ENCODE measurements at regions of chr1 and their contacts with region 1.

Region 1: DNA sequence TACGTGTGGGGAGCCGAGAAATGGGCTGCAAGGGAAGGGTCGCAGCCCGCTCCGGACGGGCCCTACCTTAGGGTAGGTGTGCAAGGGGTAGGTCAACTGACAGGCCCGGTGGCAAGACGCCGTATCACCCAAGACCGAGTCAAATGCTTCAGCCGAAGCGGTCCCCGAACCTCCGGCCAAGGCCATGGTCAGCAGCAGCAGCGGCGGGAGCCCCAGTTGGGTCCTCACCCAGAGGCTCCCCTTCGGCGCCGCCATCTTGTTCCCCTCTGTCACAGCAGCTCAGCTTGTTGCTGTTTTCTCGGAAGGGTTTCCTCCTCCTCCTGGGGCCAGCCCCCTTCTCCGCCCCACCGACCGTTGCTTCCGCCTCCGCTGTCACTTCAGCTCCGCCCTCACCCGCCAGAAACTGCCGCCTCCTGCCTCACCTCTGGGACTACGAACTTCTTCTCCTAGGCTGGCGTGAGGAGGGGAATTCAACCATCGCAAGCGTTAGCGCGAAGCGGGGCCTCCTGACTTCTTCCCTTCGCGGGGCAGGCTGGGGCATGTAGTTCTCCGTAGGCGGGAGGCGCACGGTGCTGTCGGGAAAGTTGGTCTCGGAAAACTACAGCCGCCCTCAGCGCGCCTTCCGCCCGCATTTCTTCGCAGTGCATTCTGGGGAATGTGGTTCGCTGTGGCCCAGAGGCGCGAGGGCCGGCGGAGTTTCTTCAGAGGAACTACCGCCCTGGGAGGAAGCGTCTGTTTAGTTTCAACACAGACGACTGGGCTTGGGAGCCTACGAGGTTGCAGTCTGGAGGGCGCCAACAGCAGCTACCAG is at the starts of genes TCEANC2 and TMEM59:
- DNase-seq: peak; percentile 99
- H3K4me3 Mint-ChIP-seq: no peak within 1 kb of the TSS
- H3K27ac Mint-ChIP-seq: no peak within 1 kb of the TSS
- H3K4me1 Mint-ChIP-seq: peaks cover 13% of the 10 kb centered on the region
- H3K27me3 Mint-ChIP-seq: no peaks in the 10 kb centered on the region
- CTCF ChIP-seq: no peak
- total RNA-seq, gene TCEANC2: 3.6 and 6.0 TPM in 2 replicates
- total RNA-seq, gene TMEM59: 192 and 231 TPM in 2 replicates

Region 2: GRCh38 chr1:53837924-53838652 is 215.1 kb before region 1 on chr1 and contains the start of gene NDC1:
- CTCF ChIA-PET with region 1: no interaction called
- POLR2A ChIA-PET with region 1: interaction called, 13 read pairs
- intact Hi-C with region 1: no loop called
- DNase-seq: peak; percentile 98
- H3K4me3 Mint-ChIP-seq: peak within 1 kb of the TSS; percentile 100
- H3K27ac Mint-ChIP-seq: peak within 1 kb of the TSS; percentile 97
- H3K4me1 Mint-ChIP-seq: peaks cover 10% of the 10 kb centered on the region
- H3K27me3 Mint-ChIP-seq: no peaks in the 10 kb centered on the region
- CTCF ChIP-seq: no peak
- total RNA-seq, gene NDC1: 17.5 and 18.7 TPM in 2 replicates

Region 3: GRCh38 chr1:53878492-53879105 is 174.5 kb before region 1 on chr1:
- CTCF ChIA-PET with region 1: interaction called, 5 read pairs
- POLR2A ChIA-PET with region 1: interaction called, 5 read pairs
- intact Hi-C with region 1: loop called (anchors 5 kb)
- DNase-seq: peak; percentile 59
- H3K4me3 Mint-ChIP-seq: no peak overlapping the region
- H3K27ac Mint-ChIP-seq: no peak overlapping the region
- H3K4me1 Mint-ChIP-seq: no peaks in the 10 kb centered on the region
- H3K27me3 Mint-ChIP-seq: no peaks in the 10 kb centered on the region
- CTCF ChIP-seq: peak; percentile 63

Region 4: DNA sequence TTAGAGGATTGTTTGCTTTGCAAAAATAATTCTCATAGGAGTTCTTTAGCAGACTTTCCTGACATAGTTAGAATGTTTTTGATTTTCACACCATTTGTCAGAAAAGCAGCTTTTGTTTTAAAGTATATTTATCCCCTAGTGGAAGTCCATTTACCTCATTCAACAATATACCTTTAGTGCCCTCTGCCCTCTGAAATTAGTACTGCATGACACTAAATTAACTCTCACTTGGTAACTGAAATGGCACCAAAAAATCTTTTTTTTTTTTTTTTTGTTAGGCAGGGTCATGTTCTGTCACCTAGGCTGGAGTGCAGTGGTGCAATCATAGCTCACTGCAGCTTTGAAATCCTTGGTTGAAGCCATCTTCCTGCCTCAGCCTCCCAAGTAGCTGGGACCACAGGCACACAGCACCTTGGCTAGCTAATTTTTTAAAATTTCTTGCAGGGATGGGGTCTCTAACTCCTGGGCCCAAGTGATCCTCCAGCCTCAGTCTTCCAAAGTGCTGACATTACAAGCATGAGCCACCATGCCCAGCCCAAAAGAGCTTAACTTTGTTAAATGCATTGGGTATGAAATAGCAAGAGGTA is 93.4 kb before region 1 on chr1:
- CTCF ChIA-PET with region 1: interaction called, 6 read pairs
- POLR2A ChIA-PET with region 1: interaction called, 14 read pairs
- intact Hi-C with region 1: no loop called
- DNase-seq: peak; percentile 49
- H3K4me3 Mint-ChIP-seq: no peak overlapping the region
- H3K27ac Mint-ChIP-seq: no peak overlapping the region
- H3K4me1 Mint-ChIP-seq: peaks cover 20% of the 10 kb centered on the region
- H3K27me3 Mint-ChIP-seq: no peaks in the 10 kb centered on the region
- CTCF ChIP-seq: peak; percentile 46

Region 5: GRCh38 chr1:53971718-53972117 is 81.4 kb before region 1 on chr1:
- CTCF ChIA-PET with region 1: no interaction called
- POLR2A ChIA-PET with region 1: no interaction called
- intact Hi-C with region 1: no loop called
- DNase-seq: no peak
- H3K4me3 Mint-ChIP-seq: no peak overlapping the region
- H3K27ac Mint-ChIP-seq: no peak overlapping the region
- H3K4me1 Mint-ChIP-seq: no peaks in the 10 kb centered on the region
- H3K27me3 Mint-ChIP-seq: no peaks in the 10 kb centered on the region
- CTCF ChIP-seq: no peak

Region 6: DNA sequence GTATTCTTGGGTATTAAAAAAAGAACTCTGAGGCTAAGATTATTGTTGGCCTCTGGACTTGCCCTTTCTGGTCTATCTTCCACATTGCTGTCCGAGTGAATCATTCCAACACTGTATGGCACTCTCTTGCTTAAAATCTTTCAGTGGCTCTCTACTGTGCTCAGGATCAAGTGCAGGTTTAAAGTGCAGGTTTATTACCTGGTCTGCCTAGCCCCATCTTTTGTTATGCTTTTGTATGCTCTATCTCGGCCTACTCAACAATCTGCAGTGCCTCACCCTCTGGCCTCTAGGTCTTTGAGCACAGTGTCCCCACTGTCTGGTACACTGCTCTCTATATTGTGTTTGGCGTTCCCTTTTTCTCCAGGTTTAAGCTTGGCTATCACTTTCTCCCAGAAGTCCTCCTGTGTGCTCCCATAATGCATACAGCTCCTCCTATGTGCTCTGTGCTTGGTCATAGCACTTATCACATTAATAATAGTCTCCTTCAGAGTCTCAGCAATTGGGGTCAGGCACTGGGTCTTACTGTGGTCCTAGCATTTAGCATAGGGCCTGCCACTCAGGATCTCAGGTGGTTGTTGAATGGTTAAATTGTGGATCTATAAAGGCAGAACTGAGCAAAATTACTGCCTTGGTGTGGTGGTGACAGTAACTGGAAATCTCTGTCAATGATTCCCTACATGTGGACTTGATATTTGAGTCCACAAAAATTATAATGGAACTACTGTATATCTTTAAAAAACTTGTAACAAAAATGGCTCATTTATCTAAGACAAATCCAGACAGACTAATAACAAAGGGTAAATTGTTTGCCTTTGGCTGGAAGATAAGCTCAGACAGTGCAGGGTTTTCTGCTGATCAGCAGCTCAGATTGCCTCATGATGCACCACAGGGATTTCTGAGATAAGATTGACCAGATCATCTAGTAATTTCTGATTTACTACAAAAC is 24.6 kb before region 1 on chr1:
- CTCF ChIA-PET with region 1: no interaction called
- POLR2A ChIA-PET with region 1: interaction called, 14 read pairs
- intact Hi-C with region 1: no loop called
- DNase-seq: no peak
- H3K4me3 Mint-ChIP-seq: no peak overlapping the region
- H3K27ac Mint-ChIP-seq: no peak overlapping the region
- H3K4me1 Mint-ChIP-seq: no peaks in the 10 kb centered on the region
- H3K27me3 Mint-ChIP-seq: no peaks in the 10 kb centered on the region
- CTCF ChIP-seq: no peak

Region 7: GRCh38 chr1:54064299-54064698 is 11.2 kb after region 1 on chr1:
- CTCF ChIA-PET with region 1: interaction called, 3 read pairs
- POLR2A ChIA-PET with region 1: interaction called, 10 read pairs
- intact Hi-C with region 1: no loop called
- DNase-seq: no peak
- H3K4me3 Mint-ChIP-seq: no peak overlapping the region
- H3K27ac Mint-ChIP-seq: no peak overlapping the region
- H3K4me1 Mint-ChIP-seq: no peaks in the 10 kb centered on the region
- H3K27me3 Mint-ChIP-seq: no peaks in the 10 kb centered on the region
- CTCF ChIP-seq: no peak

Region 8: GRCh38 chr1:54193453-54193852 is 140.3 kb after region 1 on chr1:
- CTCF ChIA-PET with region 1: no interaction called
- POLR2A ChIA-PET with region 1: no interaction called
- intact Hi-C with region 1: no loop called
- DNase-seq: no peak
- H3K4me3 Mint-ChIP-seq: no peak overlapping the region
- H3K27ac Mint-ChIP-seq: no peak overlapping the region
- H3K4me1 Mint-ChIP-seq: no peaks in the 10 kb centered on the region
- H3K27me3 Mint-ChIP-seq: no peaks in the 10 kb centered on the region
- CTCF ChIP-seq: no peak

Region 9: GRCh38 chr1:54488779-54489626 is 435.9 kb after region 1 on chr1:
- CTCF ChIA-PET with region 1: interaction called, 4 read pairs
- POLR2A ChIA-PET with region 1: interaction called, 23 read pairs
- intact Hi-C with region 1: no loop called
- DNase-seq: peak; percentile 74
- H3K4me3 Mint-ChIP-seq: peak overlapping the region; percentile 77
- H3K27ac Mint-ChIP-seq: peak overlapping the region; percentile 93
- H3K4me1 Mint-ChIP-seq: peaks cover 5% of the 10 kb centered on the region
- H3K27me3 Mint-ChIP-seq: no peaks in the 10 kb centered on the region
- CTCF ChIP-seq: peak; percentile 86

Measured in MCF 10A (cell line).